ENCODE measurements at regions of chr10 and their contacts with region 1.

Region 1: DNA sequence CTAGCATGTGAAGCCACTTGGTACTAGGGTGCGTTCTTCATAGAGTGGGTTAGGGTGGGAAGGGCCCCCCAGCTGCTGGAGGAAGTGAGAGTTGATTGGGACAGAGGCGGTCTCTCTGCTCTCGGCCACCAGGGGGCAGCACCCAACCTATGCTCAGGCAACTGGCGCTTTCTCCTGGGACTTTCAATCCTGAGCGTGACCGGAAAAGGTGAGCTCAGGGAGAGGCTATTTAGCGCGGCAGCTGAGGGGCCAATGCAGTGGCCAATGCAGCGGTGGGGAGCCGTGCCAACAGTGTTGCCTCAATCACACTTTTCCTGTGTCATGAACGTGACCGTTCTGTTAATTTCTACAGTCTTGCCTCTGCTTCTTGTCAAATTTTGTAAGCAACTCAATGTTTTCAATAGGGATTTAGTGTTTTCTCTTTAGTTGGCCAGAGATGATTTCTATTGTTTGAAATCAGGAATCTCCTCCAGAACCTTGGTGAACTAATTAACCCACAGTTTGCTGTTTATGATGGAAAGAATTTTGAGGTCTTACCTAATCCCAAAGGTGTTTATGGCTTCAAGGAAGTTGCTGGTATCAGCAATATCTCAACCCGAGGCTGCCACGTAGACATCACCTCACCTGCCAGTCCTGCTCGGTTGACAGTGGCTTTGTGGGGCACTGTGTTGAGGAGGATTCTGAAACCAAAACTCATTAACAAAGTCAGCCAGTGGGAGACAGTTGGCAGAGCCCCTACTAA is 67.9 kb upstream of the PDZD8 start:
- DNase-seq: peak; percentile 71 to 75 (median 72)
- ATAC-seq: peak; percentile 93
- H3K4me3 ChIP-seq: no peak overlapping the region
- H3K27ac ChIP-seq: no peak overlapping the region
- H3K4me1 ChIP-seq: peaks cover 12 to 14% of the 10 kb centered on the region in 2 experiments; a peak in 3 of 5 replicates
- H3K27me3 ChIP-seq: no peaks in the 10 kb centered on the region
- CTCF ChIP-seq: peak; percentile 65 to 83 (median 71)
- EP300 ChIP-seq: no peak
- POLR2A ChIP-seq: no peak
- RAD21 ChIP-seq: peak; percentile 25 to 54; a peak in 3 of 4 replicates

Region 2: DNA sequence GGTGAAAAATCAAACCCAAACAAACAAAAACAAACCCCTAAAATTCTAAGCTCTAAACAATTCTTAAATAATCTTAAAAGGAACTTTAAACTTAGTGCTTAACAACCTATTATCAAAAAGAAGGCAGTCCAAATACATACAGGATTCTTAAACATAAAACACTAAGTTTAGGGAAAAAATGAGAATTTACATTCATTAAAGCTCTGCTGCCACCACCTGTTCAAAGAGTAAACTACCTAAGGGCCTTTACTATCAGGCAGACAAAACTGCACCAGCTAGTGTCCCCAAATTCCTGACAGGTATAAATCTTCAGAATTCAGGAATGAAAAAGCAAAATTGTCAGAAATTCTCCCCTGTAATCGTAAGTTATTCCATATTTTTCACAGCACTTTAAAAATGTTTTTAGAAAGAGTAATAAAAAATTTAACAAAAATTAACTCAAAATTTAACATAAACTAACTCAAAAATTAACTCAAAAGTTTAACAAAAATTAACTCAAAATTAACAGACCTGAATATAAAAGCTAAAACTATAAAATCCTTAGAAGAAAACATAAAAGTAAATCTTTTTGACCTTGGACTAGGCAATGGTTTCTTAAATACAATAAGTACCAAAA is 123.0 kb before region 1 on chr10:
- CTCF ChIA-PET with region 1: no interaction called
- POLR2A ChIA-PET with region 1: no interaction called
- in situ Hi-C with region 1: no loop called
- intact Hi-C with region 1: loop called (anchors 10 kb)
- DNase-seq: peak; percentile 16 to 28 (median 24)
- ATAC-seq: peak; percentile 74; the same call in 2 of the 3 replicates
- H3K4me3 ChIP-seq: no peak overlapping the region
- H3K27ac ChIP-seq: no peak overlapping the region
- H3K4me1 ChIP-seq: no peaks in the 10 kb centered on the region
- H3K27me3 ChIP-seq: no peaks in the 10 kb centered on the region
- CTCF ChIP-seq: peak; percentile 39 to 69 (median 67); a peak in 4 of 6 replicates
- EP300 ChIP-seq: no peak
- POLR2A ChIP-seq: no peak
- RAD21 ChIP-seq: peak; percentile 74 to 80

Region 3: DNA sequence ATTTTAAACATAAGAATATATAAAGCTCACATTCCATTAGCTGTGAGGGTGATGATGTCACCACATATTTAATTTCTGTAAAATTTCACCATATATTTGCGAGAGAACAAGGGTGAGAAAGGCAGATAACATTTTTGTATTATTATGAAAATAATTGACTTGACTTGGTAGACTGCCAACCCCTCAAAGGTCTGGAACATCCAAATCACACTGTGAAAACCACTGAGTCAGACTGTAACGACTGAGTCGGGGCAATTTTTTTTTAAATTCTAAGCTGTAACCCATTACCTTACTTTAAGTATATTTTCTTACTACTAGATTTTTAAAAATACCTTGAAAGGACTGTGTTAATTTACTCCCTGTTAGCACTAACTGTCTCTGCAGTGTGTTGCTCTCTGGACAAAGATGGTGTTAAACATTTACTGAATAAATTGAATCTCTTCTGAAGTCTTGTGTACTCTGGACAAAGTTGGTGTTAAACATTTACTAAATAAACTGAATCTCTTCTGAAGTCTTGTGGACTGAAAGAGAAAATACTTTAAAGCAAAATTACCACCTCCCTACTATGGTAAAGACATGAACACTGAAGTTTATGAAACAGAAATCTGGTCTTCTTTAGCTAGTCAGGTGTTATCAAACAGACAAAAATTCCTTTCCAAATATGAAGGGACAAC is 82.0 kb before region 1 on chr10:
- CTCF ChIA-PET with region 1: no interaction called
- POLR2A ChIA-PET with region 1: no interaction called
- in situ Hi-C with region 1: no loop called
- intact Hi-C with region 1: no loop called
- DNase-seq: no peak
- ATAC-seq: no peak
- H3K4me3 ChIP-seq: no peak overlapping the region
- H3K27ac ChIP-seq: no peak overlapping the region
- H3K4me1 ChIP-seq: peaks cover 9 to 10% of the 10 kb centered on the region in 2 experiments; a peak in 4 of 5 replicates
- H3K27me3 ChIP-seq: no peaks in the 10 kb centered on the region
- CTCF ChIP-seq: no peak
- EP300 ChIP-seq: no peak
- POLR2A ChIP-seq: no peak
- RAD21 ChIP-seq: no peak

Measured in K562 (cell line).